Mammary epithelial cell (primary cell): ENCODE measurements at regions of chr9 and their contacts with region 1.

Region 1: DNA sequence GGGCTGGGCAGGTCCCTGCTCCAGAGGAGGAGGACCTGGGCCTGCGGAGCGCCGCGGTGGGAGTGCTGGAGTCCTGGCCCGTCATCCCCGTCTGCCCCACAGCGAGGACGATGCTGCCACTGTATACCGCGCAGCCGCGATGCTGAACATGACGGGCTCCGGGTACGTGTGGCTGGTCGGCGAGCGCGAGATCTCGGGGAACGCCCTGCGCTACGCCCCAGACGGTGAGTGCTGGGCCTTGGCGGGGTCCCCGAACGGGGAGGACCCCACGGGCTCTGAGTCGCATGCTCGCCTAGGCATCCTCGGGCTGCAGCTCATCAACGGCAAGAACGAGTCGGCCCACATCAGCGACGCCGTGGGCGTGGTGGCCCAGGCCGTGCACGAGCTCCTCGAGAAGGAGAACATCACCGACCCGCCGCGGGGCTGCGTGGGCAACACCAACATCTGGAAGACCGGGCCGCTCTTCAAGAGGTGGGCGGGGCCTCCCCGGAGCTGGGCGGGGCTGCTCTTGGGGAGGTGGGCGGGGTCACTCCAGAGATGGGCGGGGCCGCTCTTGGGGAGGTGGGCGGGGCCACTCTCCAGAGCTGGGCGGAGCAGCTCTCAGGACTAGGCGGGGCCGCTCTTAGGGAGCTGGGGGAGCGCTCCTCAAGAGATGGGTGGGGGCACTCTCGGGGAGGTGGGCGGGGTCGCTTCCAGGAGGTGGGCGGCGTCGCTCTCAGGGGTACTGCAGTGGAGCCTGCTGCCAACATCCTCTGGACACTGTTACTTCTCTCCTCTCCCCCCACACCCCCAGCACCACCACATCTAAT is 13.1 kb downstream of the LRRC26 start:
- DNase-seq: no peak
- H3K4me3 ChIP-seq: no peak overlapping the region
- H3K27ac ChIP-seq: no peak overlapping the region
- H3K4me1 ChIP-seq: peaks cover 4% of the 10 kb centered on the region
- H3K27me3 ChIP-seq: peaks cover 12% of the 10 kb centered on the region
- CTCF ChIP-seq: no peak

Region 2: GRCh38 chr9:136885950-136886578 is 270.7 kb before region 1 on chr9 and contains the start of gene TRAF2:
- CTCF ChIA-PET with region 1: no interaction called
- dilution Hi-C with region 1: no loop called
- in situ Hi-C with region 1: no loop called
- intact Hi-C with region 1: no loop called
- DNase-seq: peak; percentile 100
- H3K4me3 ChIP-seq: peak within 1 kb of the TSS; percentile 55 to 83 (median 82)
- H3K27ac ChIP-seq: peak within 1 kb of the TSS; percentile 65
- H3K4me1 ChIP-seq: peaks cover 40% of the 10 kb centered on the region
- H3K27me3 ChIP-seq: no peaks in the 10 kb centered on the region
- CTCF ChIP-seq: no peak
- total RNA-seq, gene TRAF2: 8.3 to 27.8 TPM

Region 3: DNA sequence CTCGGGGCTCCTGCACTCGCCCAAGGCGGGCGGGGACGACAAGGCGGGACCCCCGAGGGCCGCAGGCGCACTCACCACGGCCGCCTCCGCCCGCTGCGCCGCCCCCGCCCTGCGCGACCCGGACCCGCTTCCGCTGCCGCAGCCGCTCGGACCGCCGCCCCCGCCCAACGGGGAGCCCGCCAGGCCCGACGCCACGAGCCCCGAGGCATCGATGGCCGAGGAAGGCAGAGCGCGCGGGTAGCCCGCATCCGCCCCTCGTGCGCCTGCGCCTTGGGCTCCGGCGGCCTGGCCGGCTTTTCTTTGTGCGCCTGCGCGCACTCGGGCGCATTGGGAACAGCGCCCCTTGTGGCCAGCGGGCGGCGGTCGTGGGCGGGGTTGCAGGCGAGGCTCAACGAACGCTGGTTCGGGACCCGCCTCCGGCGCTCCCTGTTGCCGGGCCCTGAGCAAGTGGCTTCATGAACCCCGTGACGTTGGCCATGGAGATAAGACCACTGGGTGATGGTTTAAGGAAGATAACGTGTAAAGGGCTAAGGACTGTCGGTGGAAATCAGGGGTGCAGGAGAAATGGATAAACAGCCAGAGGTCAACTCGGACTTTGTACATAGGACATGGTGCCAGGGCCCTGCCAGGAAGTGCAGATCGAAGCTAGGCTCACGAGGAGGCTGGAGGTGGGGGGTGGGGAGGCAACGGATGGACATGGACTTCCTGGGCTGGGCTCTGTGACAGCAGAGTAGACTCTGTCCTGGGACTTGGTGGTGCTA is 212.1 kb before region 1 on chr9 and contains the starts of genes C8G and FBXW5:
- CTCF ChIA-PET with region 1: no interaction called
- dilution Hi-C with region 1: no loop called
- in situ Hi-C with region 1: no loop called
- intact Hi-C with region 1: no loop called
- DNase-seq: peak; percentile 90
- H3K4me3 ChIP-seq: peak within 1 kb of the TSS; percentile 68 to 83 (median 77)
- H3K27ac ChIP-seq: peak within 1 kb of the TSS; percentile 59
- H3K4me1 ChIP-seq: peaks cover 13% of the 10 kb centered on the region
- H3K27me3 ChIP-seq: no peaks in the 10 kb centered on the region
- CTCF ChIP-seq: peak; percentile 78 to 98
- total RNA-seq, gene C8G: 0.50 to 2.8 TPM
- total RNA-seq, gene FBXW5: 79.7 to 107 TPM

Region 4: GRCh38 chr9:137103206-137103999 is 53.4 kb before region 1 on chr9:
- CTCF ChIA-PET with region 1: no interaction called
- dilution Hi-C with region 1: loop called (anchors 5 kb)
- in situ Hi-C with region 1: no loop called
- intact Hi-C with region 1: no loop called
- DNase-seq: no peak
- H3K4me3 ChIP-seq: no peak overlapping the region
- H3K27ac ChIP-seq: no peak overlapping the region
- H3K4me1 ChIP-seq: no peaks in the 10 kb centered on the region
- H3K27me3 ChIP-seq: no peaks in the 10 kb centered on the region
- CTCF ChIP-seq: no peak